B cell (primary cell): ENCODE measurements at regions of chr12 and their contacts with region 1.

Region 1: DNA sequence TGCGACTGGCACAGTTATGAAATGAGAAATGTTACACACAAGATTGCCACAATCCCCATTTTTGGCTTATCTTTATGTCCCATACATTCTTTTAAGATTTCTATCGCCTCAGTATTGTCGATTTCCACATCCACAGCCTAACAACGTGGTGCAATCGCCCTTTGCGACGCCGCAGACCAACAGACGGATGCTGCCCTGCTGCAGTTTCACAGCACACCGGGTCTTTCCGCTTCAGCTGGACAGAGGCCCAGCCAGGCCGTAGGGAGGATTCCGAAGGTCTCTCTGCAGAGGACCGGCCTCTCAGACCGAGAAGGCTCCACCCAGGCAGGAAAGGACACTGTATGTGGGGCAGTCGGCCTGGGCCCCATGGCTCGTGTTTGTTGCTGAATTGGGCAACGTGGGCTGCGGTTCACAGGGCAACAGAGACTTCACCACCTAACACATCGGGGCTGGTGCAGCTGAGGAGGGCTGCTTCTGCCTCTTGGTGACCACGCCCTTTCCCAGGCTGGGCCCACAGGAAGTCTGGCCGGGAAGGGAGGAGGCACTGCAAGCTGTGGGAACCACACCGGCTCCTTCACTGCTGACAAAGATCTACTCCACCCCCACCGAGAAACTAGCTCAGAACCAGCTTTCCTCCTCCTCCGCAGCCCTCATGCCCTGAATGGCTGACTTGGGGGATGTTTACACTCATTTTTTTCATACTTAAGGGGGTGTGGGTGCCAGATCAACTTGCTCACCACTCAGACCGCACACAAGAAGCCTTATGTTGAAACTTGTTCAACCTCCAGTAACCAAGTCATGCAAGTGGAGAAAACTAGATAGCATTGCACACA is 32.9 kb upstream of the MDM1 start:
- DNase-seq: peak; percentile 77
- ATAC-seq: peak; percentile 79
- H3K4me3 ChIP-seq: peak overlapping the region; percentile 26 to 61 (median 50)
- H3K4me3 Mint-ChIP-seq: peak overlapping the region; percentile 91
- H3K27ac ChIP-seq: peak overlapping the region; percentile 85 to 88
- H3K27ac Mint-ChIP-seq: peak overlapping the region; percentile 97
- H3K4me1 ChIP-seq: peaks cover 32 to 39% of the 10 kb centered on the region in 2 donors
- H3K4me1 Mint-ChIP-seq: peaks cover 47% of the 10 kb centered on the region
- H3K27me3 ChIP-seq: no peaks in the 10 kb centered on the region
- H3K27me3 Mint-ChIP-seq: no peaks in the 10 kb centered on the region
- CTCF ChIP-seq: no peak

Region 2: GRCh38 chr12:68119724-68120211 is 245.3 kb before region 1 on chr12:
- CTCF ChIA-PET with region 1: no interaction called
- POLR2A ChIA-PET with region 1: no interaction called
- intact Hi-C with region 1: no loop called
- DNase-seq: no peak
- ATAC-seq: no peak
- H3K4me3 ChIP-seq: no peak overlapping the region
- H3K4me3 Mint-ChIP-seq: no peak overlapping the region
- H3K27ac ChIP-seq: no peak overlapping the region
- H3K27ac Mint-ChIP-seq: no peak overlapping the region
- H3K4me1 ChIP-seq: peaks cover 0 to 12% of the 10 kb centered on the region in 2 donors
- H3K4me1 Mint-ChIP-seq: no peaks in the 10 kb centered on the region
- H3K27me3 ChIP-seq: no peaks in the 10 kb centered on the region
- H3K27me3 Mint-ChIP-seq: no peaks in the 10 kb centered on the region
- CTCF ChIP-seq: no peak

Region 3: DNA sequence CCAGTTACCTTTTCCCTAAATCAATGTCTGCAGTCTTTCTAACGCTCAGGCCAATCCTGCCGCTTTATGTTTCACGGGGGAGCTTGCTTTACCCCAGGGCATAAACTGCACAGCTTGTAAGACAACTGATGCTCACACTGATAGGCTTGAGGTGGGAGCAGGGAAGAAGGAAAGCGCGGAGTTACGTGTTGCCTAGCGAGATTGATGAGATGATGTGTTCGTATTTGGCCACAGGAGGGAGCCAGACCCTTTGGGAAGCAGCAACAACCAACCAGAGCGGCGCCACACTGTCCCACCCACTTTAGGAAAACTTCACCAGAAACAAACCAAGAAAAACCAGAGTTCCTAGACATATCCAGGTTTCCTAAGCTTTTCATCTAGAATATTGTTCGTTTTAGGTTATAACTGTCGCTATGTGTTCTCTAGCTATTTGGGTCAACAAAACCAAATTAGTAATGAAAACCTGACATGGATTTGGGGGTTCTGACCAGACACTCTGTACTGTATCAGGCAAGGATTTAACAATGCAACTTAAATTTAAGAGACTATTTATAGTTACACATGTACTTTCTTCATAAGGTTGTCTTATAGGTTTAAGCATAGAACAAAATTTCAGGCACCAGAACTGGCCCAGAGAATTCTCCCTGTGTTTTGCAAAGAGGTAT is 141.9 kb before region 1 on chr12:
- CTCF ChIA-PET with region 1: no interaction called
- POLR2A ChIA-PET with region 1: no interaction called
- intact Hi-C with region 1: no loop called
- DNase-seq: peak; percentile 85
- ATAC-seq: peak; percentile 97
- H3K4me3 ChIP-seq: no peak overlapping the region
- H3K4me3 Mint-ChIP-seq: peak overlapping the region; percentile 66
- H3K27ac ChIP-seq: no peak overlapping the region
- H3K27ac Mint-ChIP-seq: no peak overlapping the region
- H3K4me1 ChIP-seq: peaks cover 6 to 7% of the 10 kb centered on the region in 2 donors
- H3K4me1 Mint-ChIP-seq: peaks cover 6% of the 10 kb centered on the region
- H3K27me3 ChIP-seq: no peaks in the 10 kb centered on the region
- H3K27me3 Mint-ChIP-seq: peaks cover 9% of the 10 kb centered on the region
- CTCF ChIP-seq: peak; percentile 87

Region 4: DNA sequence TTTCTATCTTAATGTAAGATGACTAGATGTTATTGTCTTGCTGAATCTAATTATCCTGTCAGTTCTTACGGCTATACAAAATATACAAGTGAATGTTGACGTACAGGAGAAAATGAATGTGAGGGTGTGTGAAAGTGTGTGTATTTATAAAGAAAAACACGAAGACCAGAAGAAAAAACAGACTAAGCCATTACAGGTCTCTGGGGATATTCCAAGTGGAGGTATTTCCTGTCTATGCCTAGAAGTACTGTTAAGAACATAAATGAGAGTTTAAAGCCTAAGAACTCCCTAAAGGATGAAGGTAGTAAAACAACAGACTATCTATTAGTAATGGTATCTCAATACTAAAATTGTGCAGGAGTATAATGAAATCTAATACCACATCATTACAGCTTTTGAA is 40.6 kb before region 1 on chr12:
- CTCF ChIA-PET with region 1: no interaction called
- POLR2A ChIA-PET with region 1: no interaction called
- intact Hi-C with region 1: no loop called
- DNase-seq: no peak
- ATAC-seq: no peak
- H3K4me3 ChIP-seq: no peak overlapping the region
- H3K4me3 Mint-ChIP-seq: no peak overlapping the region
- H3K27ac ChIP-seq: no peak overlapping the region
- H3K27ac Mint-ChIP-seq: no peak overlapping the region
- H3K4me1 ChIP-seq: no peaks in the 10 kb centered on the region
- H3K4me1 Mint-ChIP-seq: peaks cover 11% of the 10 kb centered on the region
- H3K27me3 ChIP-seq: no peaks in the 10 kb centered on the region
- H3K27me3 Mint-ChIP-seq: no peaks in the 10 kb centered on the region
- CTCF ChIP-seq: no peak

Region 5: GRCh38 chr12:68416826-68417225 is 51.7 kb after region 1 on chr12:
- CTCF ChIA-PET with region 1: no interaction called
- POLR2A ChIA-PET with region 1: no interaction called
- intact Hi-C with region 1: loop called (anchors 5 kb)
- DNase-seq: no peak
- ATAC-seq: no peak
- H3K4me3 ChIP-seq: no peak overlapping the region
- H3K4me3 Mint-ChIP-seq: no peak overlapping the region
- H3K27ac ChIP-seq: no peak overlapping the region
- H3K27ac Mint-ChIP-seq: no peak overlapping the region
- H3K4me1 ChIP-seq: peaks cover 5 to 9% of the 10 kb centered on the region in 2 donors
- H3K4me1 Mint-ChIP-seq: peaks cover 26% of the 10 kb centered on the region
- H3K27me3 ChIP-seq: no peaks in the 10 kb centered on the region
- H3K27me3 Mint-ChIP-seq: no peaks in the 10 kb centered on the region
- CTCF ChIP-seq: no peak